ENCODE measurements at regions of chr9 and their contacts with region 1.

Region 1: GRCh38 chr9:19456996-19457692 is 48.3 kb downstream of the ACER2 start:
- DNase-seq: peak; percentile 74 to 77 (median 74)
- ATAC-seq: peak; percentile 95
- H3K4me3 ChIP-seq: no peak overlapping the region
- H3K27ac ChIP-seq: no peak overlapping the region
- H3K4me1 ChIP-seq: peaks cover 0 to 3% of the 10 kb centered on the region in 2 experiments; a peak in 1 of 5 replicates
- H3K27me3 ChIP-seq: no peaks in the 10 kb centered on the region
- CTCF ChIP-seq: peak; percentile 72 to 90 (median 85)
- EP300 ChIP-seq: no peak
- POLR2A ChIP-seq: no peak
- RAD21 ChIP-seq: peak; percentile 79 to 90

Region 2: GRCh38 chr9:17531642-17532254 is 1925.4 kb before region 1 on chr9:
- CTCF ChIA-PET with region 1: no interaction called
- POLR2A ChIA-PET with region 1: no interaction called
- in situ Hi-C with region 1: loop called (anchors 25 kb)
- intact Hi-C with region 1: no loop called
- DNase-seq: peak; percentile 8 to 35 (median 24)
- ATAC-seq: no peak
- H3K4me3 ChIP-seq: no peak overlapping the region
- H3K27ac ChIP-seq: no peak overlapping the region
- H3K4me1 ChIP-seq: no peaks in the 10 kb centered on the region
- H3K27me3 ChIP-seq: no peaks in the 10 kb centered on the region
- CTCF ChIP-seq: peak; percentile 39 to 57 (median 51); a peak in 4 of 6 replicates
- EP300 ChIP-seq: no peak
- POLR2A ChIP-seq: no peak
- RAD21 ChIP-seq: peak; percentile 49 to 54

Region 3: DNA sequence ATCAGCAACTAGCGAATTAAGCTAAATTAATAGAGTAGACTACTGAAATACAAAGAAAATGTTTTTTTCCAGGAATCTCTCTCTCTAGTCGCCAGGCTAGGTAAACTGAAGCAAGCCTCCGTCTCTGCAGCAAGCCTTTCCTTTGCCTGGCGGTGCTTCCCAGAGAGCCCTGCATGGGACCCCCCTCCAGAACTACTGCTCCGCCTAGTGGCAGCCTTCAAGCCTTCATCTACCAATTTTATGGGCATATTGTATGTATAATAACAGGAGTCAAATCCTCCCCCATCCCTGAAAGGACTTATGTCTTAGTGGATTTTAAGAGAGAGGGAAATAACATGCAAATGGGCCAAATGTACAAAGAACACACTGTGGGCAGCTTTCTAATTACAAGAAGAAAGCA is 666.1 kb before region 1 on chr9:
- CTCF ChIA-PET with region 1: no interaction called
- POLR2A ChIA-PET with region 1: no interaction called
- in situ Hi-C with region 1: loop called (anchors 25 kb)
- intact Hi-C with region 1: no loop called
- DNase-seq: peak; percentile 14 to 56 (median 21)
- ATAC-seq: peak; percentile 82
- H3K4me3 ChIP-seq: no peak overlapping the region
- H3K27ac ChIP-seq: no peak overlapping the region
- H3K4me1 ChIP-seq: no peaks in the 10 kb centered on the region
- H3K27me3 ChIP-seq: no peaks in the 10 kb centered on the region
- CTCF ChIP-seq: peak; percentile 52 to 57 (median 53); a peak in 5 of 6 replicates
- EP300 ChIP-seq: no peak
- POLR2A ChIP-seq: no peak
- RAD21 ChIP-seq: peak; percentile 45 to 53

Region 4: DNA sequence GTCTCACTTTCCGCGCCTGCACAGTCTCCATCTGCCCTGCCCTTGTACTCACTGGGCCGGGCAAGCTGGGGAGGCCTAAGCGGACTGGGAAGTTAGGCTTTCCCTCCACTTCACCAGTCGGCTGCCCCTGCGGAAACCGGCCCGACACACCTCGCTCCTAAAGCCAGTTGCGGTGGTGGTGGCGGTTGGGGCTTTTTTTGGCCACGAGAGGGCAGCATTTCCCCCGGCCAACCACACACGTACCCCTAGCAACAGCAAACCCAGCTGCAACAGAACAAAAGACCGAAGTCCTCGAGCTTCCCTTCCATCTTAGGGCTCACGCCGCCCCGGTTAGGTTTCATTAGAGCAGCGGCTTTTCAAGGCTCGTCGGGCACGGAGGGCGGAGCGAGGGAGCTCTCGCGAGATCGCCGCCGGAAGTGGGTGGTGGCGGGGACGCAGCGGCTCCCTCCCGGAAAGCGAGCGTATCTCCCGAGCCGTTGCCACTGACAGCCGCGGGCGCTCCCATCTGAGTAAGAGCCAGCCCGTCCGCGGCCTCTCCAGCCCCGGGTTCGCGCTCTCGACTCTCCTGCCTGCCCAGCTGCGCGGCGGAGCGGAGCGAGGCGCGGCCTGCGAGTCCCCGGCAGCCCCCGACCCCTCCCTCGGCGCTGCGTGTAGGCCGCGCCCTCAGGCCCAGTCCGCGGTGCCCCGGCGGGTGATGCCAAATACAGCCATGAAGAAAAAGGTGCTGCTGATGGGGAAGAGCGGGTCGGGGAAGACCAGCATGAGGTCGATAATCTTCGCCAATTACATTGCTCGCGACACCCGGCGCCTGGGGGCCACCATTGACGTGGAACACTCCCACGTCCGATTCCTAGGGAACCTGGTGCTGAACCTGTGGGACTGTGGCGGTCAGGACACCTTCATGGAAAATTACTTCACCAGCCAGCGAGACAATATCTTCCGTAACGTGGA is 407.9 kb before region 1 on chr9 and contains the start of gene RRAGA:
- CTCF ChIA-PET with region 1: no interaction called
- POLR2A ChIA-PET with region 1: interaction called, 5 read pairs
- in situ Hi-C with region 1: no loop called
- intact Hi-C with region 1: loop called (anchors 5 kb)
- DNase-seq: peak; percentile 88 to 92 (median 88)
- ATAC-seq: peak; percentile 90
- H3K4me3 ChIP-seq: peak within 1 kb of the TSS; percentile 82
- H3K27ac ChIP-seq: peak within 1 kb of the TSS; percentile 90
- H3K4me1 ChIP-seq: peaks cover 3 to 7% of the 10 kb centered on the region in 2 experiments; a peak in 4 of 5 replicates
- H3K27me3 ChIP-seq: no peaks in the 10 kb centered on the region
- CTCF ChIP-seq: peak; percentile 59 to 80 (median 71)
- EP300 ChIP-seq: 0 out of 2 replicates have a peak, but pooled peaks have one; percentile 2
- POLR2A ChIP-seq: peak; percentile 93
- RAD21 ChIP-seq: peak; percentile 35 to 59; a peak in 3 of 4 replicates
- polyA plus RNA-seq, gene RRAGA: 6.0 to 7.7 TPM

Region 5: DNA sequence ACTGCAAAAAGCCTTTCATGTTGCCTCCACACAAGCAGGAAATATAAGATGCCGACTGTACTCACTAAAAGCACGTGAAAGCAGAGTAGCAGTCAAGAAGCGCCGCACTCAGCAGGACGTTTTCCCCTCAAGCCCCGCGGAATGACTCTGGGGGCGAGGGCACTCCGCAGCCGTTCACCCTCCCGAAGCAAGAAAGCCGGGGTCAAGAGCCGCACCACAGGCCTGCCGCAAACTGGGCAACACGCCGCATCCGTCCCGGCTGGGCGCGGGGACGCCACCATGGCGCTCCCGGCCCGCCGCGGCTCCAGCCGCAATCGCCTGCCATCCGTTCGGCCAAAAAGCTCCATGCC is 77.5 kb before region 1 on chr9:
- CTCF ChIA-PET with region 1: no interaction called
- POLR2A ChIA-PET with region 1: no interaction called
- in situ Hi-C with region 1: no loop called
- intact Hi-C with region 1: loop called (anchors 5 kb)
- DNase-seq: peak in 3 of 4 experiments; percentile 22 to 44 (median 43)
- ATAC-seq: peak; percentile 38
- H3K4me3 ChIP-seq: peak overlapping the region; percentile 92
- H3K27ac ChIP-seq: peak overlapping the region; percentile 88
- H3K4me1 ChIP-seq: peaks cover 0 to 4% of the 10 kb centered on the region in 2 experiments; a peak in 2 of 5 replicates
- H3K27me3 ChIP-seq: no peaks in the 10 kb centered on the region
- CTCF ChIP-seq: no peak
- EP300 ChIP-seq: no peak
- POLR2A ChIP-seq: no peak
- RAD21 ChIP-seq: no peak

Region 6: GRCh38 chr9:19641046-19641445 is 183.9 kb after region 1 on chr9:
- CTCF ChIA-PET with region 1: no interaction called
- POLR2A ChIA-PET with region 1: no interaction called
- in situ Hi-C with region 1: no loop called
- intact Hi-C with region 1: no loop called
- DNase-seq: peak in 1 of 4 experiments; percentile 11
- ATAC-seq: no peak
- H3K4me3 ChIP-seq: no peak overlapping the region
- H3K27ac ChIP-seq: no peak overlapping the region
- H3K4me1 ChIP-seq: no peaks in the 10 kb centered on the region; a peak in 1 of 5 replicates
- H3K27me3 ChIP-seq: no peaks in the 10 kb centered on the region
- CTCF ChIP-seq: peak in 1 of 3 experiments; percentile 32; a peak in 3 of 6 replicates
- EP300 ChIP-seq: no peak
- POLR2A ChIP-seq: no peak
- RAD21 ChIP-seq: peak; percentile 25 to 48; a peak in 3 of 4 replicates

Measured in K562 (cell line).